Endothelial cell of umbilical vein (primary cell): ENCODE measurements at regions of chr17 and their contacts with region 1.

Region 1: DNA sequence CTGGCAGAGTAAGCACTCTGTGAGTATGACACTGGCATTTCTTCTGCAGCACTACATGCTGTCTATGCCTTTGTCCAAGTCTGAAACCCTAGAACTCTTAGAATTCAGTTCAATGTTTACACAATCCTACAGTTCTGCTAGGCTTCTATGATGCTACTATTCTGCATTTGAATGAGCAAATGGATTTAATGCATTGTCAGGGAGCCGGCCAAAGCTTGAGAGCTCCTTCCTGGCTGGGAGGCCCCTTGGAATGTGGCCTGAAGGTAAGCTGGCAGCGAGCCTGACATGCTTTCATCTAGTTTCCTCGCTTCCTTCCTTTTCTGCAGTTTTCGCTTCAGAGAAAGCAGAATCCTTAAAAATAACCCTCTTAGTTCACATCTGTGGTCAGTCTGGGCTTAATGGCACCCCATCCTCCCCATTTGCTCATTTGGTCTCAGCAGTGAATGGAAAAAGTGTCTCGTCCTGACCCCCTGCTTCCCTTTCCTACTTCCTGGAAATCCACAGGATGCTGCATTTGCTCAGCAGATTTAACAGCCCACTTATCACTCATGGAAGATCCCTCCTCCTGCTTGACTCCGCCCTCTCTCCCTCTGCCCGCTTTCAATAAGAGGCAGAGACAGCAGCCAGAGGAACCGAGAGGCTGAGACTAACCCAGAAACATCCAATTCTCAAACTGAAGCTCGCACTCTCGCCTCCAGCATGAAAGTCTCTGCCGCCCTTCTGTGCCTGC is at the start of gene CCL2:
- DNase-seq: peak; percentile 92
- H3K4me3 ChIP-seq: peak within 1 kb of the TSS in 2 of 3 experiments; percentile 43 to 46
- H3K27ac ChIP-seq: peak within 1 kb of the TSS; percentile 96
- H3K4me1 ChIP-seq: peaks cover 78% of the 10 kb centered on the region
- H3K27me3 ChIP-seq: no peaks in the 10 kb centered on the region
- CTCF ChIP-seq: no peak
- POLR2A ChIP-seq: no peak
- total RNA-seq, gene CCL2: 160 and 238 TPM in 2 replicates

Region 2: DNA sequence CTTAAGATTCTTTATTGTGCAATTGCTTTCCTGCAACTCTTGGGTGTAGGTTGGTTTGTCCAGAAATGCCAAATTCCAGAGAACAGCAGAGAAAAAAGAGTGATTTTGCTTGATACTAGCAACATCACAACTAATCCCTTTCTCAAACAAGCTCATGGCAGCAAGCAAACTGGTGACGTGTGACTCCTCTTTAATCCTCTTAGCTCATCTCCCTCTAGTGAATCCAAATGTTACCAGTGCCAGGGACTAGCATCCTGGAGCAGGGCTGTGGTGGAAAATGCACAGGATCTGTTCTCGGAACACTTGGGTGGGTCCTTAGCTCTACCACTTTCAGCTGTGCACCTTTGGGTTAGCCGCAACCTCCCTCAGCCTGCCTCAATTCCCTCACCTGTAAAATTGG is 203.8 kb before region 1 on chr17:
- CTCF ChIA-PET with region 1: no interaction called
- POLR2A ChIA-PET with region 1: no interaction called
- dilution Hi-C with region 1: no loop called
- intact Hi-C with region 1: no loop called
- DNase-seq: no peak
- H3K4me3 ChIP-seq: no peak overlapping the region
- H3K27ac ChIP-seq: no peak overlapping the region
- H3K4me1 ChIP-seq: no peaks in the 10 kb centered on the region
- H3K27me3 ChIP-seq: no peaks in the 10 kb centered on the region
- CTCF ChIP-seq: no peak
- POLR2A ChIP-seq: no peak

Region 3: DNA sequence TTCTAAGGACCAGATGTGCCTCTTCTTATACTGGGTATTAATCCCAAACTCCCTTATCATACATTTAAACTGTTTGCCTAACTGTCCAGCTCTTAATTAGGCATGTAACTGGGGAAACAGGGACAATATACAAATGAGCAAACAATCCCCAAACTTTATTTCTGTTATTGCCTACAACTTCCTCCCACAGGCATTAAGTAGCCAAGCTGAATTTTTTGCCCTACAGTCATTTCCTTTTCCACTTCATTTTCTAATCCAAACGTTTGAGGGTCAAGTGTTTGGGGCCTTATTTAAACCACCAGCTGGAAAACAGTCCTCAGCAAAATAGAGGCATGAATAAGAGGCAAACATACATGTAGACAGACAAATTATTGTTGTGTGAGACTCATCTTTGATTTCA is 77.2 kb before region 1 on chr17:
- CTCF ChIA-PET with region 1: no interaction called
- POLR2A ChIA-PET with region 1: no interaction called
- dilution Hi-C with region 1: no loop called
- intact Hi-C with region 1: loop called (anchors 1 kb)
- DNase-seq: peak; percentile 90
- H3K4me3 ChIP-seq: no peak overlapping the region
- H3K27ac ChIP-seq: peak overlapping the region; percentile 67
- H3K4me1 ChIP-seq: peaks cover 19% of the 10 kb centered on the region
- H3K27me3 ChIP-seq: peaks cover 21 to 25% of the 10 kb centered on the region in 2 experiments
- CTCF ChIP-seq: no peak
- POLR2A ChIP-seq: no peak

Region 4: DNA sequence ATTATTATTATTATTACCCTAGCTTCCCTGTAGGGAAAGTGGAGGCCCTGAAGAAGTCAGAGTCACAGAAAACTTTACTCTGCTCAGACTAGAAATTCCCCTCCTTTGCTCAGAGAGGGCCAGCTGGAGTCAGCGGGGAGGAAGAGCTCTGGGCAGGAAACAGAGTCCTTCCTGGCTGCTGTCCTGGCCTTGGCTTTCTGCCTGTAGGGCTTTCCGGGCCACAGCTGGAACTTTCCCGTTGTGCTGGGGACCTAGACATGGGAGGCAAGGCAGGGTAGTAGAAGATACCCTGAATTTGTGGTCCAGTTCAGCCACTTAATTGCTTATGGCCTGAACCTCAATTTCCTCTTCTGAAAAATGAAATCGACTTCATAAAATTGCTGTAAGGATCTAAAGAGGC is 13.8 kb before region 1 on chr17:
- CTCF ChIA-PET with region 1: interaction called, 6 read pairs
- POLR2A ChIA-PET with region 1: interaction called, 16 read pairs
- dilution Hi-C with region 1: no loop called
- intact Hi-C with region 1: loop called (anchors 1 kb)
- DNase-seq: peak; percentile 79
- H3K4me3 ChIP-seq: no peak overlapping the region
- H3K27ac ChIP-seq: peak overlapping the region; percentile 97
- H3K4me1 ChIP-seq: peaks cover 74% of the 10 kb centered on the region
- H3K27me3 ChIP-seq: no peaks in the 10 kb centered on the region
- CTCF ChIP-seq: no peak
- POLR2A ChIP-seq: no peak

Region 5: DNA sequence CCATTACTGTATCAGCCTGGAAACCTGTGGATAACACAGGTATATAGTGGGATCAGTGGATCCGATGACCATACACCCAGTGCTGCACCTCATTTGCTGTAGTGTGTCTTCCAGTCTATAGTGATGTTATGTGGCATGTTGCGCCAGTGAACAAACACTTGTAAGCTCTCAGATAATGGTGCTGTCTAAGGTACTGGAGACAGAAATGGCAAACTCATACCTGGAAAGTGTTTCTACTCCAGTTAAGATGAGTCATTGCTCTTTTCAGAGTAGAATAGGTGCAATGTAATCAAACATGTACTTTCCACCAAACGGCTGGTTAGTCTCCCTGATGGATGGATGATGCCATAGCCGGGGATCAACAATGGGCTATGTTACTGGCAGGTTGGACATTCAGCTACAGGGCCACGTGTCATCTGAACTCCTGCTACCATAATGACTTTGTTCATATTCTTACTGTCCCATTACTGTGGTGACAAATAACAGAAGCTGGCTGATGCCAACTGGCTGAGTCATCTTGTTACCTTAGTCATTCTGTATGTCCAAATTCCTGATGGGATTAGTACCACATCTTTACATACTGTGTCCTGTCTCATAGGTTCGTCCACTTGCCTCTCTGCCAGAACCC is 37.0 kb after region 1 on chr17:
- CTCF ChIA-PET with region 1: no interaction called
- POLR2A ChIA-PET with region 1: no interaction called
- dilution Hi-C with region 1: no loop called
- intact Hi-C with region 1: no loop called
- DNase-seq: no peak
- H3K4me3 ChIP-seq: no peak overlapping the region
- H3K27ac ChIP-seq: no peak overlapping the region
- H3K4me1 ChIP-seq: peaks cover 5% of the 10 kb centered on the region
- H3K27me3 ChIP-seq: peaks cover 0 to 4% of the 10 kb centered on the region in 2 experiments
- CTCF ChIP-seq: no peak
- POLR2A ChIP-seq: no peak

Region 6: GRCh38 chr17:34306466-34306865 is 51.6 kb after region 1 on chr17:
- CTCF ChIA-PET with region 1: interaction called, 15 read pairs
- POLR2A ChIA-PET with region 1: no interaction called
- dilution Hi-C with region 1: no loop called
- intact Hi-C with region 1: loop called (anchors 1 kb)
- DNase-seq: peak; percentile 75
- H3K4me3 ChIP-seq: no peak overlapping the region
- H3K27ac ChIP-seq: no peak overlapping the region
- H3K4me1 ChIP-seq: no peaks in the 10 kb centered on the region
- H3K27me3 ChIP-seq: peaks cover 15% of the 10 kb centered on the region in 2 experiments
- CTCF ChIP-seq: peak; percentile 46 to 57
- POLR2A ChIP-seq: no peak

Region 7: DNA sequence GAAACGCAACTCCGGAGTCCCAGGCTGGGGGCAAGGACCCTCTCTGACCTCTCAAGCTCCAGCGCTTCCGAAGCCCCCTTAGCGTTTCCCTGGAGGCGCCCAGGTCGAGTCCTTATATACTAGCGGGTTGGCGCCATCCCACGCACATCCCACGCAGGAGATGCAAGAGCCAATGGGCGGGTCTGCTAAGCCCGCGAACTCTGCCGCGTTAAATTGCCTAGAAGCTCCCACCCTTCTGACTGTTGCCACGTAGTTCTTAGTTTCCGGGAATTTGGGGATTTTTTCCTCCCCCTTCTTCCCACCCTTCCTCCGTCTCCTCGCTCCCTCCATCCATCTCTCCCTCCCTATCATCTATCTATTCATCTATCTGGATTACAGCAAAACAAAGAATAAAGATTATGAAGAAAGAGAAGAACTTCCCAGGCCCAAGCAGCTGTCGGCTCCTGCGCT is 1118.7 kb after region 1 on chr17 and contains the start of gene SLFN11:
- CTCF ChIA-PET with region 1: no interaction called
- POLR2A ChIA-PET with region 1: no interaction called
- dilution Hi-C with region 1: no loop called
- intact Hi-C with region 1: loop called (anchors 10 kb)
- DNase-seq: peak; percentile 92
- H3K4me3 ChIP-seq: peak within 1 kb of the TSS; percentile 88 to 96 (median 90)
- H3K27ac ChIP-seq: peak within 1 kb of the TSS; percentile 98
- H3K4me1 ChIP-seq: peaks cover 21% of the 10 kb centered on the region
- H3K27me3 ChIP-seq: no peaks in the 10 kb centered on the region
- CTCF ChIP-seq: no peak
- POLR2A ChIP-seq: peak; percentile 97
- total RNA-seq, gene SLFN11: 95.0 and 110 TPM in 2 replicates